ENCODE measurements at regions of chr5 and their contacts with region 1.

Region 1: DNA sequence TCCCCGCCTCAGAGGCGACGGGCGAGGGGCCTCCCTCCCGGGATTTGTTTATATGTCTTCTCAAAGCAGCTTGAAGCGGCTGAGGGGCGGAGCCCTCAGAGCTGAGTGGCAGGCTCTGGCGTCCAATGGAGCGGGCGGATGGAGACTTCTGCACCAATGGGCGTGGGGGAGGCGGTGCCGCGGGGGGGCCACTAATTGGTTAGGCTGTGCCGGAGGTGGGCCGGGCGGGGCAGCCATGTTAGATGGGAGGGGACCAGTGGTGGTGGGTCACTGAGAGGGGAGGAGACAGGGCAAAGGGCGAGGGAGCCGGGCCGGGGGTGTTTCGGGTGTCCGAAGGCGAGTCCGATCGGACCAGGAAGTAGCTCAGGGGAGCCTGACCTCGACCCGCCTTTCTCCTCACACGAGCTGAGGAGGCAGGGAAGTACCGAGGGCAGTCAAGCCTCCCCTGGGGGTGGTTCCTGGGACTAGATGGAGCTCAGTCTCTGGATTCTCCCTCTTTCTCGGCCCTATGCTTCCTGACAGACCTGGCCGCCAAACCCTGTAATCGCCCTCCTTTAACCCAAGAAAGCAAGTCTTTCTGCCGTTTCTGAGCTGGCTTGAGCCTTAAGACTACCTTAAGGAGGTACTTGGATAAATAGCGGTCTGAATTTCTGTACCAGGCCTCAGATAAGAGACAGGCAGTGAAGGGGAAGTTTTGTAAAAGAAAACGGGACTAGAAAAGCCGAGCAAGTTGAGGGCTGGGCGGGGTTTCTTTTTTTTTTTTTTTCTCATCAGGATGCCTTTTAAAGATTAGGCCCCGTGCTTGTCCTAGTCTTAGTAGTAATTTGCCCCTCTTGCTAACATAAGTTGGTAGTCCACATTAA is 1.1 kb downstream of the CREBRF start:
- DNase-seq: peak; percentile 97
- H3K4me3 ChIP-seq: peak overlapping the region; percentile 83
- H3K27ac ChIP-seq: peak overlapping the region; percentile 93
- H3K27me3 ChIP-seq: no peaks in the 10 kb centered on the region
- CTCF ChIP-seq: peak; percentile 35

Region 2: GRCh38 chr5:172622091-172623046 is 434.9 kb before region 1 on chr5:
- CTCF ChIA-PET with region 1: no interaction called
- POLR2A ChIA-PET with region 1: no interaction called
- DNase-seq: no peak
- H3K4me3 ChIP-seq: no peak overlapping the region
- H3K27ac ChIP-seq: no peak overlapping the region
- H3K27me3 ChIP-seq: peaks cover 33% of the 10 kb centered on the region
- CTCF ChIP-seq: no peak

Region 3: GRCh38 chr5:173010547-173011464 is 46.5 kb before region 1 on chr5:
- CTCF ChIA-PET with region 1: interaction called, 3 read pairs
- POLR2A ChIA-PET with region 1: interaction called, 14 read pairs
- DNase-seq: no peak
- H3K4me3 ChIP-seq: no peak overlapping the region
- H3K27ac ChIP-seq: no peak overlapping the region
- H3K27me3 ChIP-seq: no peaks in the 10 kb centered on the region
- CTCF ChIP-seq: peak; percentile 27; the same call in 1 of the 2 replicates

Region 4: GRCh38 chr5:173041881-173042762 is 15.2 kb before region 1 on chr5:
- CTCF ChIA-PET with region 1: interaction called, 4 read pairs
- POLR2A ChIA-PET with region 1: interaction called, 10 read pairs
- DNase-seq: peak; percentile 73
- H3K4me3 ChIP-seq: no peak overlapping the region
- H3K27ac ChIP-seq: peak overlapping the region; percentile 84
- H3K27me3 ChIP-seq: no peaks in the 10 kb centered on the region
- CTCF ChIP-seq: no peak

Region 5: GRCh38 chr5:173245319-173246134 is 188.2 kb after region 1 on chr5:
- CTCF ChIA-PET with region 1: no interaction called
- POLR2A ChIA-PET with region 1: no interaction called
- DNase-seq: no peak
- H3K4me3 ChIP-seq: no peak overlapping the region
- H3K27ac ChIP-seq: no peak overlapping the region
- H3K27me3 ChIP-seq: peaks cover 90% of the 10 kb centered on the region
- CTCF ChIP-seq: no peak

Measured in AG04450 (cell line).